B cell (primary cell): ENCODE measurements at regions of chr1 and their contacts with region 1.

Region 1: GRCh38 chr1:117929173-117929989 is at the starts of genes GDAP2 and WDR3:
- DNase-seq: peak; percentile 96
- ATAC-seq: peak; percentile 89
- H3K4me3 ChIP-seq: peak within 1 kb of the TSS; percentile 82 to 91 (median 86)
- H3K4me3 Mint-ChIP-seq: peak within 1 kb of the TSS; percentile 99
- H3K27ac ChIP-seq: peak within 1 kb of the TSS; percentile 77 to 91
- H3K27ac Mint-ChIP-seq: peak within 1 kb of the TSS; percentile 92
- H3K4me1 ChIP-seq: peaks cover 24 to 31% of the 10 kb centered on the region in 2 donors
- H3K4me1 Mint-ChIP-seq: peaks cover 59% of the 10 kb centered on the region
- H3K27me3 ChIP-seq: no peaks in the 10 kb centered on the region
- H3K27me3 Mint-ChIP-seq: no peaks in the 10 kb centered on the region
- CTCF ChIP-seq: no peak
- total RNA-seq, gene GDAP2: 36.7 and 41.5 TPM in 2 replicates
- total RNA-seq, gene WDR3: 14.9 and 18.5 TPM in 2 replicates

Region 2: DNA sequence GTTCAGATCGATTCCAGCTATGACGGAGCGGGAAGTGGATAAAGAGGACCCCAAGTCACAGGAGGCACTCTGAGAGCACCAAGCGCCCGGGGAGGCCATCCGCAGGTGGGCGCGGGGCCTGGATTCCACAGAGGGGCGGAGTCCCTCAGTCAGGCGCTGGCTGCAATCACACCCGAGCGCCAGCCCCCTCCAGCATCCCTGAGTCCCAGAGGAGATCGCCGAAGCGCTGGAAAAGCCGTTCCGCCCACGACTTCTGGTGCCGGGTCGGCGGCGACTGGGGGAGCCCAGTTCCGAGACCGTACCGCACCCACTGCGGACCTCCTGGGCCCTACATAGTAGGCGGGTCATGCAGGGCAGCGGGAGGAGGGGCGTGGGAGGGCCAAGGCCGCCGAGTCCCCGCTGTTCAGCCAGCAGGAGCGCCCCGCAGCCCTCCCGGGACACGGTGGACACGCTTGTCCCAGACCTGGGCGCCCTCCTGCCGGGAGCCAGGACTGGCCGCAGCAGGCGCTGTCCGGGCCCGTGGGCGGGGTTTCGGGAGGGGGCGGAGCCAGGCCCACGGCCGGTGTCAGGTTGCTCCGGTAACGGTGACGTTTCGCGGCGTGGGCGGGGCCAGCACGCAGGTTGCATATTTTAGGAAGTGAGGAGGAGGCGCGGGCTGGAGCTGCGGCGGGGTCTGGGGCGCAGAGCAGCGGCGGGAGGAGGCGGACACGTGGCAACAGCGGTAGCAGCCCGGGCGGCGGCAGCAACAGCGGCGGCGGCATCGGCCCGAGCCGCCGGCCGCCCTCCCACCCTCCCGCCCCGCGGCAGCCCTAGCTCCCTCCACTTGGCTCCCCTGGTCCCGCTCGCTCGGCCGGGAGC is 1556.6 kb before region 1 on chr1 and contains the start of gene ATP1A1:
- CTCF ChIA-PET with region 1: no interaction called
- POLR2A ChIA-PET with region 1: no interaction called
- intact Hi-C with region 1: loop called (anchors 2 kb)
- DNase-seq: peak; percentile 99
- ATAC-seq: peak; percentile 79
- H3K4me3 ChIP-seq: peak within 1 kb of the TSS; percentile 46 to 90 (median 84)
- H3K4me3 Mint-ChIP-seq: peak within 1 kb of the TSS; percentile 96
- H3K27ac ChIP-seq: peak within 1 kb of the TSS; percentile 81 to 91
- H3K27ac Mint-ChIP-seq: peak within 1 kb of the TSS; percentile 96
- H3K4me1 ChIP-seq: peaks cover 39 to 44% of the 10 kb centered on the region in 2 donors
- H3K4me1 Mint-ChIP-seq: peaks cover 37% of the 10 kb centered on the region
- H3K27me3 ChIP-seq: peaks cover 0 to 7% (median 3%) of the 10 kb centered on the region in 4 experiments
- H3K27me3 Mint-ChIP-seq: peaks cover 20% of the 10 kb centered on the region
- CTCF ChIP-seq: no peak
- total RNA-seq, gene ATP1A1: 101 and 107 TPM in 2 replicates

Region 3: GRCh38 chr1:117367047-117368018 is 562.0 kb before region 1 on chr1 and contains the start of gene MAN1A2:
- CTCF ChIA-PET with region 1: no interaction called
- POLR2A ChIA-PET with region 1: no interaction called
- intact Hi-C with region 1: loop called (anchors 1 kb)
- DNase-seq: peak; percentile 90
- ATAC-seq: peak; percentile 76
- H3K4me3 ChIP-seq: peak within 1 kb of the TSS; percentile 84 to 94 (median 92)
- H3K4me3 Mint-ChIP-seq: peak within 1 kb of the TSS; percentile 96
- H3K27ac ChIP-seq: peak within 1 kb of the TSS; percentile 86 to 88
- H3K27ac Mint-ChIP-seq: peak within 1 kb of the TSS; percentile 98
- H3K4me1 ChIP-seq: peaks cover 34 to 46% of the 10 kb centered on the region in 2 donors
- H3K4me1 Mint-ChIP-seq: peaks cover 63% of the 10 kb centered on the region
- H3K27me3 ChIP-seq: no peaks in the 10 kb centered on the region
- H3K27me3 Mint-ChIP-seq: no peaks in the 10 kb centered on the region
- CTCF ChIP-seq: no peak
- total RNA-seq, gene MAN1A2: 54.0 and 55.6 TPM in 2 replicates

Region 4: GRCh38 chr1:117740496-117740895 is 188.9 kb before region 1 on chr1:
- CTCF ChIA-PET with region 1: no interaction called
- POLR2A ChIA-PET with region 1: no interaction called
- intact Hi-C with region 1: no loop called
- DNase-seq: no peak
- ATAC-seq: no peak
- H3K4me3 ChIP-seq: no peak overlapping the region
- H3K4me3 Mint-ChIP-seq: no peak overlapping the region
- H3K27ac ChIP-seq: no peak overlapping the region
- H3K27ac Mint-ChIP-seq: no peak overlapping the region
- H3K4me1 ChIP-seq: peaks cover under 1 to 3% of the 10 kb centered on the region in 2 donors
- H3K4me1 Mint-ChIP-seq: peaks cover 5% of the 10 kb centered on the region
- H3K27me3 ChIP-seq: no peaks in the 10 kb centered on the region
- H3K27me3 Mint-ChIP-seq: peaks cover 21% of the 10 kb centered on the region
- CTCF ChIP-seq: no peak

Region 5: DNA sequence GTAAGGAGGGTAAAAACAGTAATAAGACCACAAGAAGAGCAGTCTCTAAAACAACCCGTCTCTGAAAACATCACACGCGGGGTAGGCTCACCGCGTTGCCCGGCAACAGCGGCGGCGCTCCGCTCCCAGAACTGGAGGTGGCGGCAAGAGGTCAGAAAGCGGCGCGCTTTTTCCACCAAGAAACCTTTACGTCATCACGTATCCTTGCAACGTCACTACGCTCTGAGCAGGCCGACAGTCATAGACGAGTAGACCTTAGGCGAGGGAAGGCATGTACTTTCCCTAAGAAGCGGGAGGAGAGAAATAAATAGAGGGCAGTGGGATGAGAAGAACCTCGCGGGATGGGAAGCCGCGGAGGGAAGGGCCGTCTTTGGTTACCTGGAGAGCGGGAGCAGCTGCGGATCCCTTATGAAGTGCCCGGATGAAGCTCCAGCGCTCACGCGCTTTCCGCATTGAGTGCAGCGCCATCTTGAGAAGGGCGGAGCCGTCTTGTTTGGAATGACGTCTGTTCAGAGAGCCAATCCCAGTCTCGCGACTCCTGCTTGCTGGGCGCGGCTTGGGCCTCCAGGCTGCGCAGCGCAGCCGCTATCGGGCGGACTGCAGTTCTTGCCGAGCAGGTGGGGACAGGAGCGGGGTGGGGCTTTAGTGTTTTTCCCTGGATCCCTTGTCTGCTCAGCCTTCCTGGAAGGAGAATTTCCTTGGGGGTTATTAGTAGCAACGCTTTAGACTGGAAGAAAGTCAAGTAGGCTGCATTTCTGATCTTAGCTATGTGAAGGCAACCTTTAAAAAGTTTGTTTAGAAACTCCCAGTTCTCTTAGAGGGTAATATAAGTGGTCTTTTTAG is 1211.0 kb after region 1 on chr1 and contains the start of gene WARS2:
- CTCF ChIA-PET with region 1: no interaction called
- POLR2A ChIA-PET with region 1: no interaction called
- intact Hi-C with region 1: loop called (anchors 1 kb)
- DNase-seq: peak; percentile 99
- ATAC-seq: peak; percentile 92
- H3K4me3 ChIP-seq: peak within 1 kb of the TSS; percentile 53 to 87 (median 79)
- H3K4me3 Mint-ChIP-seq: no peak within 1 kb of the TSS
- H3K27ac ChIP-seq: peak within 1 kb of the TSS; percentile 95 to 97
- H3K27ac Mint-ChIP-seq: no peak within 1 kb of the TSS
- H3K4me1 ChIP-seq: peaks cover 18 to 19% of the 10 kb centered on the region in 2 donors
- H3K4me1 Mint-ChIP-seq: peaks cover 17% of the 10 kb centered on the region
- H3K27me3 ChIP-seq: no peaks in the 10 kb centered on the region
- H3K27me3 Mint-ChIP-seq: no peaks in the 10 kb centered on the region
- CTCF ChIP-seq: no peak
- total RNA-seq, gene WARS2: 14.3 and 17.8 TPM in 2 replicates